Right ventricle myocardium inferior (tissue), 1 donor: ENCODE measurements at regions of chr4 and their contacts with region 1.

Region 1: DNA sequence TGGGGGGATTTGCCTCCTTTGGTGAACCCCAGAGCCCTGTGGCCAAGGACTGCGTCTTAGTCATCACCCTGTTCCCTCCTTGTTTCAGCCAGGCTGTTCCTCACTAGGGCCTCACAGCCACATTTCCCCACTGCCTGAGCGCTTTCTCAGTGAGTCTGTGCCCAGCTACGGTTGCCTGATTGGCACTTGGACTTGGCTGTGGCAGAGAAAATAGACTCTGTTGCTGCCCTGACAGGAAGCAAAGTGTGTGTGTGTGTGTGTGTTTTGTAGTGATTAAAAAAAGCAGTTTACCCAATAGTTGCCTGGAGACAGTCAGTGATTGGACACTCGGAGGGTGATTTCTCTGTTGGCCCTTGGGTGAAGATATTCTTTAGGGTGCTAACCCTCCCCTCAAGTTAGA is 113.0 kb downstream of the UCHL1 start:
- DNase-seq: no peak
- ATAC-seq: peak; percentile 83

Region 2: DNA sequence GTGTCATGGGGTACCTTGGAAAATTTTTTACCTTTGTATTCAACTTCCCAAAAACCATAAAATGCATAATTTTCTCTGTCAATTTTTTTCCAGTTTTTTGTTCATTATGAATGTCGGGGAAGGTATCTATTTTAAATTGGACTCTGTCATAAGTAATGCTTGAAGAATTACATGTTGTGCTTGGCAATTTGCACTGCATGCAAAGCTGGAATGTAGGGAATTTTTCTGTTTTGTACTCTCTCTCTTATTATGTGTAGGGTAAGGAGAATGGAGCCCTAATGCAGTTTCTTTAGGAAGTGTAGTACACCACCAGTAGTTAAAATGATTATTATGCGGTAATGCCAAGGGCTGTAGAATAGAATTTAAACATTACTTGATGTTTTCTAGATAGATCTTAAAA is 30.6 kb after region 1 on chr4:
- intact Hi-C with region 1: no loop called
- DNase-seq: no peak
- ATAC-seq: no peak

Region 3: DNA sequence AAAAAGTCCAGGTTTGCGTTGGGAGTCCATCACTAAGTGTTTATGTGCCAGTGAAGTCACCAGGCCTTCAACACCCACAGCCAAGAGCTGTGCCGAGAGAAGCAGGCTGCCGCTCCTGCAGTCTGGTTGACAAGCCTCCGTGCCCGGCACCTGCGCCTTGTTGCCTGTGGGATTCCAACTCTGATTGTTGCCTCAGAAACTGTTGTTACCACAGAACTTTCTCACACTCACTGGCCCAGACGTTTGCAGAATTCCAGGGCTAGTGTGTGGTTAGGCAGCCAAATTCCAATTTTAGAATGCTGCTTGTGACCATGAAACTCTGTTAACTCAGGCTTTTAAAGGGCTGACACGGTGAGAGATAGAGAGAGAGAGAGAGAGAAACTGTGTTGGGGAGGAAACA is 48.7 kb after region 1 on chr4:
- intact Hi-C with region 1: loop called (anchors 2 kb)
- DNase-seq: peak; percentile 89
- ATAC-seq: peak; percentile 94